ENCODE measurements at regions of chr1 and their contacts with region 1.

Region 1: DNA sequence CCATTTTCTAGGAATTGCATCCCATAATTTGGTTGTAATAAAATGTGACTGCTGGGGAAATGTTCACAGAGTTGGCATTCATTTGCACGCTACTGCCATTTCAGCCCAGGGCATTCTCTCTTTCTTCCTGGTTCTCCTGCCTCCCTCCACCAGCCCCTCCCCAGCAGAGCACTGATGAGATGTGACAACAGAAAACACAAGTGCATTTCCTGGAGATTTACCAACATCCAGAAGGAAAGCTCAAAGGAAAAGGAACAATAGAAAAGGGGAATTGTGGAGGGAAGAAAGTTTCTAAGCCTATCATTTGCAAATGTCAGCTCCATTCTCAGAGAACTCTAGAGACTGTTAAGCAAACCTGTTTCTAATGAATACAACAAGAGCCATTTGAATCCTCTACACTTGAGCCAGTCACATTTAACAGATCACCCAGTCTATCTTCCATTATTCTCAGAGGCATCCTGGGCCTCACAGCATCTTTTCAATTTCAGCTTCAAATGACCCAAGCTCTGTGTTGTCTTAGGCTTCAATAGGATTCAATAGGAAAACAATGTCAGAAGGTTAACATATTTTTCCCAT is 395.6 kb upstream of the PBX1 start:
- DNase-seq: no peak
- H3K4me3 ChIP-seq: no peak overlapping the region
- H3K27ac ChIP-seq: no peak overlapping the region
- H3K4me1 ChIP-seq: no peaks in the 10 kb centered on the region
- H3K27me3 ChIP-seq: no peaks in the 10 kb centered on the region
- CTCF ChIP-seq: no peak

Region 2: DNA sequence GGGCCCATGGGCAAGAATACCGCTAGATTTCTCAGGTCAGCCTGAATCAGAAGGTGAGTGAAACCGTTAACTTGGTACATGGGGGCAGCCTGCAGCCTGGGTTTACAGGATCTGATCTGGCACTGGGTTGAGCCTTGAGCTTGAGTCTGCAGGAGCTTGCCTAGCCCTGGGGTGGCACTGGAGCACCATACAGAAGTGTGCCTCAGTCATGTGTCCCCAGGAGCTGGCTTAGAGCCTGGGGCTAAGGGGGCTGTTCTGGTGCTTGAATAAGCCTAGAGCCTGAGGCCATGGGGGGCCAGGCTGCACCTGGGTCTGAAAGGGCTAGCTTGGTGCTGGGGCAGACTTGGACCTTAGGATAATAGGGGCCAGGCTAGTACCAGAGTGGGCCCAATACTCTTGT is 61.6 kb before region 1 on chr1:
- CTCF ChIA-PET with region 1: no interaction called
- POLR2A ChIA-PET with region 1: no interaction called
- intact Hi-C with region 1: no loop called
- DNase-seq: no peak
- H3K4me3 ChIP-seq: no peak overlapping the region
- H3K27ac ChIP-seq: no peak overlapping the region
- H3K4me1 ChIP-seq: no peaks in the 10 kb centered on the region
- H3K27me3 ChIP-seq: no peaks in the 10 kb centered on the region
- CTCF ChIP-seq: no peak

Region 3: GRCh38 chr1:164914208-164914607 is 750.8 kb after region 1 on chr1:
- CTCF ChIA-PET with region 1: no interaction called
- POLR2A ChIA-PET with region 1: no interaction called
- intact Hi-C with region 1: loop called (anchors 10 kb)
- DNase-seq: peak in 1 of 2 experiments; percentile 57
- H3K4me3 ChIP-seq: no peak overlapping the region
- H3K27ac ChIP-seq: no peak overlapping the region
- H3K4me1 ChIP-seq: peaks cover 4% of the 10 kb centered on the region
- H3K27me3 ChIP-seq: no peaks in the 10 kb centered on the region
- CTCF ChIP-seq: peak; percentile 58